A673 (cell line): ENCODE measurements at regions of chr11 and their contacts with region 1.

Region 1: GRCh38 chr11:43504316-43504950 is 145.7 kb downstream of the TTC17 start:
- DNase-seq: peak; percentile 54
- H3K4me3 ChIP-seq: no peak overlapping the region
- H3K27ac ChIP-seq: no peak overlapping the region
- H3K4me1 ChIP-seq: no peaks in the 10 kb centered on the region
- H3K27me3 ChIP-seq: no peaks in the 10 kb centered on the region
- CTCF ChIP-seq: peak; percentile 50

Region 2: GRCh38 chr11:43298397-43298796 is 206.0 kb before region 1 on chr11:
- CTCF ChIA-PET with region 1: no interaction called
- POLR2A ChIA-PET with region 1: interaction called, 11 read pairs
- intact Hi-C with region 1: no loop called
- DNase-seq: no peak
- H3K4me3 ChIP-seq: no peak overlapping the region
- H3K27ac ChIP-seq: no peak overlapping the region
- H3K4me1 ChIP-seq: no peaks in the 10 kb centered on the region
- H3K27me3 ChIP-seq: no peaks in the 10 kb centered on the region
- CTCF ChIP-seq: no peak

Region 3: DNA sequence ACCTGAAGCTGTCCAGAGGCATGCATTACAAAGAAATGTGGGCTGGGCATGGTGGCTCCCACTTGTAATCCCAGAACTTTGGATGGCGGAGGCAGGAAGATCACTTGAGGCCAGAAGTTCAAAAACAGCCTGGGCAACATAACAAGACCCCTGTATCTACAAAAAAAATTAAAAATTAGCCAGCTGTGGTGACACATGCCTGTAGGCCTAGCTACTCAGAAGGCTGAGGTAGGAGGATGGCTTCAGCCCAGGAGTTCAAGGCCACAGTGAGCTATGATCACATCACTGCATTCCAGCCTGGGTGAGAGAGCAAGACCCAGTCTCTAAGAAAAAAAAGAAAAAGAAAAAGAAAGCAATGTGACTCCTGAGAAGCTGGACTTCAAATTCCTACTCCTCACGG is 37.6 kb after region 1 on chr11:
- CTCF ChIA-PET with region 1: no interaction called
- POLR2A ChIA-PET with region 1: no interaction called
- intact Hi-C with region 1: no loop called
- DNase-seq: no peak
- H3K4me3 ChIP-seq: no peak overlapping the region
- H3K27ac ChIP-seq: no peak overlapping the region
- H3K4me1 ChIP-seq: no peaks in the 10 kb centered on the region
- H3K27me3 ChIP-seq: peaks cover 37% of the 10 kb centered on the region
- CTCF ChIP-seq: no peak

Region 4: GRCh38 chr11:43567396-43567975 is 63.1 kb after region 1 on chr11:
- CTCF ChIA-PET with region 1: interaction called, 6 read pairs
- POLR2A ChIA-PET with region 1: no interaction called
- intact Hi-C with region 1: loop called (anchors 5 kb)
- DNase-seq: peak; percentile 85
- H3K4me3 ChIP-seq: no peak overlapping the region
- H3K27ac ChIP-seq: no peak overlapping the region
- H3K4me1 ChIP-seq: no peaks in the 10 kb centered on the region
- H3K27me3 ChIP-seq: peaks cover 79% of the 10 kb centered on the region
- CTCF ChIP-seq: peak; percentile 98

Region 5: DNA sequence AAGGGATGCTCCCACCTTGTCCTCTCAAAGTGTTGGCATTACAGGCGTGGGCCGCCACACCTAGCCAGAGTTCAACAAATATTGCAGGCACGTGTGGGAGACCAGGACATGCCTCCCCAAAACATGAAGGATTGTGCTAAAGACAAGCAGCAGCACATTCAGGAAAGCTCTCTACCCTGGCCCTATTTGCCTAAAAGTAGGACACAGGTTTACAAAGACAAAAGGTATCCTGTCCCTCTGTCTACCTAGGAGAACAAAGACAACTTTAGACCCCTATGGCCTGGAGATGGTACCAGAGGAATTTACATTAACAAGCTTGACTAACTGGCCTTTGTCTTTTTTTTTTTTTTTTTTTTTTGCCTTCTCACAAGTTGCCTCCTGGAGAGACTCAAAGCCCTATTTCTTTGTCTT is 560.7 kb after region 1 on chr11:
- CTCF ChIA-PET with region 1: no interaction called
- POLR2A ChIA-PET with region 1: no interaction called
- intact Hi-C with region 1: no loop called
- DNase-seq: no peak
- H3K4me3 ChIP-seq: no peak overlapping the region
- H3K27ac ChIP-seq: peak overlapping the region; percentile 82
- H3K4me1 ChIP-seq: peaks cover 15% of the 10 kb centered on the region
- H3K27me3 ChIP-seq: no peaks in the 10 kb centered on the region
- CTCF ChIP-seq: no peak